ENCODE measurements at regions of chr3 and their contacts with region 1.

Region 1: GRCh38 chr3:107753480-107753879 is 230.7 kb downstream of the BBX start:
- DNase-seq: peak; percentile 63
- ATAC-seq: peak; percentile 50
- H3K4me3 ChIP-seq: no peak overlapping the region
- H3K27ac ChIP-seq: no peak overlapping the region
- H3K4me1 ChIP-seq: peaks cover 13% of the 10 kb centered on the region
- H3K27me3 ChIP-seq: no peaks in the 10 kb centered on the region
- CTCF ChIP-seq: peak; percentile 82

Region 2: GRCh38 chr3:107699682-107700081 is 53.8 kb before region 1 on chr3:
- CTCF ChIA-PET with region 1: no interaction called
- POLR2A ChIA-PET with region 1: no interaction called
- intact Hi-C with region 1: no loop called
- DNase-seq: no peak
- ATAC-seq: no peak; the same call in none of the 2 replicates
- H3K4me3 ChIP-seq: no peak overlapping the region
- H3K27ac ChIP-seq: no peak overlapping the region
- H3K4me1 ChIP-seq: no peaks in the 10 kb centered on the region
- H3K27me3 ChIP-seq: no peaks in the 10 kb centered on the region
- CTCF ChIP-seq: no peak

Region 3: DNA sequence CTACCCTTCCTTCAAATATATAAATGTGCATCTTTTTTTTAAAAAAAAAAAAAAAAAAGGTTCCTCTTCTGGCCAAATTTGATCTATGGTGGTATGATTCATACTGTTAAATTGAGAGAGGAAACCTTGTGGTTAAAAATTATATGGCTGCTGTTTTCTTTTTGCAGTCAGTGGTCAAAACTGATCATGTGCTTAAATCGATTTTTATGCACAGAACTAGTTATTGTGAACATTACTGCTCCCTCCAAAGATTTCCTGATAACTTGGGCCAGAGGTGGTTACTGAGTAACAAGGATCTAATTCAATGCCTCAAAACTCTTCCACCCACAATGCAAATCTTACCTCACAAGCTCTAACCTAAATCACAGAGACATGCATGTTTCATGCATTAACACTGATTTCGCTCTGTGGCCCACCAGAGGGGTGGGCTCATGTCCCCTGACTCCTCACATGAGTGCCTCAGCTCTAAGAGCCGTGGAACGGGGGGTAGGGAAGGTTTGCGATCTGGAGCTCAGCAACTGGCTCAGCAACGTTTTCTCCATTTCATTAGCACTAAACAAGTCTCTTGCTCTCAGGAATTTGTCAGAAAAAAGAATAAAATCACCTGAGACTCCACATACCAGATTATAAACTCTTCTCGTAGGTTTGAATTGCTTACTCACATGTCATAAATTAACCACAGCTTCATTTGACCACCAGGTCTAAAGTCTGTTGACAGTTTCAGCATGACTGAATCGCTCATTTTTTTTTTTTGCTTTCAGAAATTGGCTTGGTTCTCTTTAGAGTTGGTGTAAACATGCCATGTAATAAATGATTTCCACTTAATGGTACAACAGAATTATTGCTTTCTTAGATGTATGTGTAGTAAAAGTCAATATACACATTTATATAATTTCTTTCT is 56.9 kb after region 1 on chr3:
- CTCF ChIA-PET with region 1: no interaction called
- POLR2A ChIA-PET with region 1: no interaction called
- intact Hi-C with region 1: loop called (anchors 2 kb)
- DNase-seq: peak; percentile 75
- ATAC-seq: peak; percentile 88
- H3K4me3 ChIP-seq: peak overlapping the region; percentile 34; the same call in 1 of the 2 replicates
- H3K27ac ChIP-seq: peak overlapping the region; percentile 75
- H3K4me1 ChIP-seq: peaks cover 16% of the 10 kb centered on the region
- H3K27me3 ChIP-seq: no peaks in the 10 kb centered on the region
- CTCF ChIP-seq: no peak

Measured in PC-3 (cell line).